Right ventricle myocardium inferior (tissue), 1 donor: ENCODE measurements at regions of chr14 and their contacts with region 1.

Region 1: GRCh38 chr14:63388763-63389431 is 70.2 kb upstream of the GPHB5 start:
- DNase-seq: no peak
- ATAC-seq: peak; percentile 76

Region 2: GRCh38 chr14:63641473-63642228 is 252.8 kb after region 1 on chr14 and contains the start of gene WDR89:
- intact Hi-C with region 1: loop called (anchors 5 kb)
- DNase-seq: peak; percentile 98
- ATAC-seq: peak; percentile 99
- total RNA-seq, gene WDR89: 6.6 TPM

Region 3: DNA sequence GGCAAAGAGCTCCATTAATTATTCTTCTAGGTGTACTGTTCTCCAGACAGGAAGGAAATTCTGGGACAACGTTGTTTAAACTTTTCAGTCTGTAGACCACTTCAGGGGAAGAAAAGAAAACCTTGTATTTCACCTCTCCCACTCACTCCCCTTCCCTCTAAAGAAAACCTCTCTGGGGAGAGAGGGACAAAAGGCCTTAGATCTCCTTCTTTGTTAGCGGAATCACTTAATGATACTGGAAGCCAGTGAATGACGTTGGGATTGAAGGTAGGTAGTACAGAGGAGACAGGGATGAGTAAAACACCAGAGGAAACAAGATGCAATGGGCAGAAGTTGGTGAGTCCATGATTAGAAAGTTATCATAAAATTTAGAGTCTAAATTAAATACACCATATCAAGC is 377.7 kb after region 1 on chr14:
- intact Hi-C with region 1: loop called (anchors 5 kb)
- DNase-seq: no peak
- ATAC-seq: no peak